Sciatic nerve (tissue), 2 donors: ENCODE measurements at regions of chr13 and their contacts with region 1.

Region 1: GRCh38 chr13:110433014-110433413 is 125.9 kb downstream of the COL4A2 start:
- DNase-seq: no peak
- ATAC-seq: peak; percentile 69

Region 2: GRCh38 chr13:108549934-108550333 is 1883.1 kb before region 1 on chr13:
- intact Hi-C with region 1: no loop called
- DNase-seq: no peak
- ATAC-seq: no peak

Region 3: DNA sequence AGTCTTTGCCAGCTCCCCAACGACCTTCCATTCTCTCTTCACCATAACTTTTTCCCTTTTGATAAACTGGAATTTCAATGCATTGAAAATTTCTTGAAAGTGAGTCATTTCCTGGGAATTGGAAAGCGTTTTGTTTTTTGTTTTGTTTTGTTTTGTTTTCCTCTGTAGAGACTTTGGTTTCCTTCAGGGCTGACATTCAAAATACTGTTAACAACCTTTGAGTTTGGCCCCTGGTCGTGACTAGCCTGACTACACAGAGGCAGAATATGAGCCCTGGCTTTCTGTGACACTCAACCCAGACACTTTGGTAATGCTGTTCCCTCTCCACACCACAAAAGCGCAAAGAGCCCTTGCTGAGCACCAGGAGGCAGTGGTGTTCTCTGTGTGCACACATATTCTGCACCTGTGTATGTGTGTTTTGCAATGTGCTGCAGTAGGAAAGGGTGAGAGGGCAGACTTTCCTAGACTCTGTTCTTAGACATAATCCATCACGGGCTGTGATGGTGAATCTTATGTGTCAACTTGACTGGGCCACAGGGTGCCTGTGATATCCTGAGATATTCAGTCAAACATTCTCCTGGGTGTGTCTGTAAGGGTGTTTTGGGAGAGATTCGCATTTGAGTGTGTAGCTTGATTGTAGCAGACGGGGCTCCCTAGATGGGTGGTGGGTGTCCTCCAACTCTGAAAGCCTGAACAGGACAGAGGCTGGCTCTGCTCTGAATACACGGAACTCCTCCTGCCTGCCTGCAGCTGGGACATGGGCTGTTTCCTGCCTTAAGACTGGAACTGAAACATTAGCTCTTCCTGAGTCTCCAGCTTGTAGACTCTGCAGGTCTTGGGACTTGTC is 511.3 kb after region 1 on chr13:
- intact Hi-C with region 1: no loop called
- DNase-seq: no peak
- ATAC-seq: peak; percentile 77

Region 4: GRCh38 chr13:111920932-111921705 is 1488.1 kb after region 1 on chr13:
- intact Hi-C with region 1: loop called (anchors 5 kb)
- DNase-seq: no peak
- ATAC-seq: no peak